ENCODE measurements at regions of chr3 and their contacts with region 1.

Region 1: DNA sequence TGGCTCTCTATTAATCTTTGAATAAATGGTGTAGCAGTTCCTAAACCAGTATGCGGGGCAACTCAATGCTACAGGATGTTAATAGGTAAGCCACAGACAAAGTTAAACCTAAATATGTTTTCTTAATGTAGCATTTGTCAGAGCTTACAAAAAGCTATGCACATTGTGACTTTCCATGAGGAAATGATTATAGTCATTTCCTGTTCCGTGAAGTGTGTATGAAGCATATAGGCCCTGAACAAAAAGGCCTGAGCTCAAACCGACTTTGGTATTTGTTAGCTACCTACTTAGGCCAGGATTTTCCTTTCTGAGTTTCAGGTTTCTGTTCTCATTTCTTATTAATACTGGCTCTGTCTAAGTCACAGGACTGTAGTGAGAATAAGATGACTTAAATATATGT is 14.2 kb downstream of the ZNF80 start:
- DNase-seq: peak in 1 of 2 donors; percentile 70
- ATAC-seq: peak; percentile 52 to 59 (median 57)
- H3K4me3 ChIP-seq: no peak overlapping the region
- H3K4me3 Mint-ChIP-seq: peak overlapping the region; percentile 78
- H3K27ac ChIP-seq: peak overlapping the region; percentile 65
- H3K27ac Mint-ChIP-seq: peak overlapping the region in 1 of 2 donors; percentile 94
- H3K4me1 ChIP-seq: peaks cover 59% of the 10 kb centered on the region
- H3K4me1 Mint-ChIP-seq: peaks cover 78 to 88% of the 10 kb centered on the region in 2 donors
- H3K27me3 ChIP-seq: no peaks in the 10 kb centered on the region
- H3K27me3 Mint-ChIP-seq: no peaks in the 10 kb centered on the region
- CTCF ChIP-seq: no peak

Region 2: GRCh38 chr3:114274929-114275328 is 51.8 kb after region 1 on chr3:
- intact Hi-C with region 1: loop called (anchors 5 kb)
- DNase-seq: no peak
- ATAC-seq: peak in 1 of 3 donors; percentile 32
- H3K4me3 ChIP-seq: no peak overlapping the region
- H3K4me3 Mint-ChIP-seq: no peak overlapping the region
- H3K27ac ChIP-seq: no peak overlapping the region
- H3K27ac Mint-ChIP-seq: peak overlapping the region; percentile 0
- H3K4me1 ChIP-seq: peaks cover 5% of the 10 kb centered on the region
- H3K4me1 Mint-ChIP-seq: peaks cover 47 to 50% of the 10 kb centered on the region in 2 donors
- H3K27me3 ChIP-seq: no peaks in the 10 kb centered on the region
- H3K27me3 Mint-ChIP-seq: no peaks in the 10 kb centered on the region
- CTCF ChIP-seq: no peak

Region 3: DNA sequence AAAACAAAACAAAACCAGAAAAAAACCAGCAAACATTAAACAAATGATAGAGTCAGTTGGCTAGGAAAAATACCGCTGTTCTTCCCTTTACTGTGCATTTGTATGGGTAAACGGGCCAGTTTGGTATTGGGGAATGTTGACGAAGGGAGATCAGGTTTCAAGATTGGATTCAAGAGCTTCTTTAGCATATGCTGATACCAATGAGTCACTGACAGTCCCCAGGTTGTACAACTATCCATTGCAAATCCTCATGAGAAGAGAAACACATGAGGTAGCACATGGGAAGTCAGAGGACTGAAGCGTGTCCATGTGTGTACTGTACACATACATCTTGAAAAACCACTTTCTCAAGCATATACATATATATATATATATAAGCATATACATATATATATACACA is 96.3 kb after region 1 on chr3:
- intact Hi-C with region 1: no loop called
- DNase-seq: no peak
- ATAC-seq: no peak
- H3K4me3 ChIP-seq: no peak overlapping the region
- H3K4me3 Mint-ChIP-seq: no peak overlapping the region
- H3K27ac ChIP-seq: no peak overlapping the region
- H3K27ac Mint-ChIP-seq: no peak overlapping the region
- H3K4me1 ChIP-seq: peaks cover 13% of the 10 kb centered on the region
- H3K4me1 Mint-ChIP-seq: peaks cover 56 to 58% of the 10 kb centered on the region in 2 donors
- H3K27me3 ChIP-seq: no peaks in the 10 kb centered on the region
- H3K27me3 Mint-ChIP-seq: no peaks in the 10 kb centered on the region
- CTCF ChIP-seq: no peak

Region 4: GRCh38 chr3:114336122-114336697 is 113.1 kb after region 1 on chr3:
- intact Hi-C with region 1: loop called (anchors 5 kb)
- DNase-seq: no peak
- ATAC-seq: no peak
- H3K4me3 ChIP-seq: no peak overlapping the region
- H3K4me3 Mint-ChIP-seq: no peak overlapping the region
- H3K27ac ChIP-seq: no peak overlapping the region
- H3K27ac Mint-ChIP-seq: peak overlapping the region in 1 of 2 donors; percentile 57
- H3K4me1 ChIP-seq: peaks cover 18% of the 10 kb centered on the region
- H3K4me1 Mint-ChIP-seq: peaks cover 35 to 54% of the 10 kb centered on the region in 2 donors
- H3K27me3 ChIP-seq: no peaks in the 10 kb centered on the region
- H3K27me3 Mint-ChIP-seq: no peaks in the 10 kb centered on the region
- CTCF ChIP-seq: peak; percentile 54

Region 5: DNA sequence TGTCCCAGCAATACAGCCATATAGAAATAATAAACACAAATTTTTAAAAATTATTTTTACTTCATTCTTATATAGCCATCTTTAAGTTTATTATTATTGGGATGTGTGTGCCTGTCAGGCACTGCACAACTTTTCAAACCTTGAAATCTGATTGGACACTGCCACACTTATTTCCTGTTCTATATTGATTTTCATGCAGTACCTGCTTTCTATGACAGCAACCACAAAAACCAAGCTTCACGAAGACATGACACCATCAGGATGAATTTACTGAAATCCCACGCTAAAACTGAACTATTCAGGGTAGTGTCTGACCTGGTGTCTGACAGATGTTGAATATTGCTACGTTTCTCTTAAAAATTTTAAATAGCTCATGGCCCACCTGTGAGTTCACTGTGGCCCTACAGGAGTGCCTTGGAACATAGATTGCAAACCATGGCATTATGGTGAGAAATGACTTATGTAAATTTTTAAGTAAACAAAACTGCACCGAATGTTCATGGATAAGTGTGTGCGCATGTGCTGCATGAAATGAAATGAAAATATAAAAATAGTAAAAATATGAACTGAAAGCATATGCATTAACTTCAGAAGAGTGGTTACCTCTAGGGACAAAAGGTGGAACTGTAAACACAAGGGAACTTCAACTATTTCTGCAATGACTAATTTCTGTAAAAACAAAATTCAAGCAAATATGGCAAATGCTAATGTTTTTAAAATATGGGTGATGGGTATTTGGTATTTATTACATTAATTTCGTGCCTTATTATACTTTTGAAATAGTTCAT is 771.6 kb after region 1 on chr3:
- intact Hi-C with region 1: no loop called
- DNase-seq: no peak
- ATAC-seq: no peak
- H3K4me3 ChIP-seq: no peak overlapping the region
- H3K4me3 Mint-ChIP-seq: no peak overlapping the region
- H3K27ac ChIP-seq: no peak overlapping the region
- H3K27ac Mint-ChIP-seq: no peak overlapping the region
- H3K4me1 ChIP-seq: no peaks in the 10 kb centered on the region
- H3K4me1 Mint-ChIP-seq: peaks cover 0 to 14% of the 10 kb centered on the region in 2 donors
- H3K27me3 ChIP-seq: no peaks in the 10 kb centered on the region
- H3K27me3 Mint-ChIP-seq: no peaks in the 10 kb centered on the region
- CTCF ChIP-seq: no peak

Measured in natural killer cell (primary cell).